Right ventricle myocardium inferior (tissue), 1 donor: ENCODE measurements at regions of chr6 and their contacts with region 1.

Region 1: GRCh38 chr6:150813319-150813992 is 52.0 kb upstream of the MTHFD1L start:
- DNase-seq: no peak
- ATAC-seq: peak; percentile 21

Region 2: GRCh38 chr6:150600301-150601017 is 213.0 kb before region 1 on chr6:
- intact Hi-C with region 1: loop called (anchors 5 kb)
- DNase-seq: peak; percentile 74
- ATAC-seq: peak; percentile 51

Region 3: GRCh38 chr6:150685860-150686259 is 127.6 kb before region 1 on chr6:
- intact Hi-C with region 1: loop called (anchors 5 kb)
- DNase-seq: no peak
- ATAC-seq: no peak

Region 4: DNA sequence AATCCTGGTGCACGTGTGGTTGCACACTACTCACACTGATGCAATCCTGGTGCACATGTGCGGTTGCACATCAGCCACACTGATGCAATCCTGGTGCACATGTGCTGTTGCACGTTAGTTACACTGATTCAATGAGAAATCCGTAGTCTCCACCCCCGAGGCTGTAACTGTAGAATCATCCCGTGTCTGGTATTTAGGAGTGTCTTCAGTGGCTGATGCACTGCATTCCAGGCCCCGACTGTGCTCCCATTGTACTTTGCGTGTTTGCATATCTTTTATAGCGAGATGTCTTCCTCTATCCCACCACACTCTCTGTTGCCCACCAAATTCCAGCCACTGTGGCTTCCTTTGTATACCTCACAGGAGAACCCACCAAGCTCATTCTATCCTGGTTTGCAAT is 35.7 kb before region 1 on chr6:
- intact Hi-C with region 1: loop called (anchors 1 kb)
- DNase-seq: no peak
- ATAC-seq: no peak

Region 5: GRCh38 chr6:150874179-150874578 is 60.7 kb after region 1 on chr6:
- intact Hi-C with region 1: loop called (anchors 5 kb)
- DNase-seq: no peak
- ATAC-seq: no peak